ENCODE measurements at regions of chr2 and their contacts with region 1.

Region 1: GRCh38 chr2:70248181-70248847 is at the start of gene TIA1:
- DNase-seq: peak; percentile 94 to 99 (median 98)
- ATAC-seq: peak; percentile 98
- H3K4me3 ChIP-seq: peak within 1 kb of the TSS; percentile 87
- H3K4me3 Mint-ChIP-seq: peak within 1 kb of the TSS; percentile 83 to 99 (median 95)
- H3K27ac ChIP-seq: peak within 1 kb of the TSS; percentile 95
- H3K27ac Mint-ChIP-seq: peak within 1 kb of the TSS; percentile 91 to 100 (median 97)
- H3K4me1 ChIP-seq: peaks cover 13 to 24% of the 10 kb centered on the region in 2 donors
- H3K4me1 Mint-ChIP-seq: peaks cover 23 to 48% (median 40%) of the 10 kb centered on the region in 7 donors
- H3K27me3 ChIP-seq: no peaks in the 10 kb centered on the region
- H3K27me3 Mint-ChIP-seq: peaks cover 0 to 4% (median 0%) of the 10 kb centered on the region in 5 donors
- total RNA-seq, gene TIA1: 80.9 to 244 (median 163) TPM

Region 2: GRCh38 chr2:69386789-69387734 is 861.3 kb before region 1 on chr2 and contains the start of gene GFPT1:
- CTCF ChIA-PET with region 1: no interaction called
- POLR2A ChIA-PET with region 1: no interaction called
- intact Hi-C with region 1: loop called in 1 of 2 experiments (anchors 2 kb)
- DNase-seq: peak; percentile 85 to 96 (median 91)
- ATAC-seq: peak; percentile 99
- H3K4me3 ChIP-seq: peak within 1 kb of the TSS; percentile 68
- H3K4me3 Mint-ChIP-seq: peak within 1 kb of the TSS; percentile 84 to 94 (median 88)
- H3K27ac ChIP-seq: peak within 1 kb of the TSS; percentile 83
- H3K27ac Mint-ChIP-seq: peak within 1 kb of the TSS; percentile 63 to 94 (median 86)
- H3K4me1 ChIP-seq: peaks cover 17 to 18% of the 10 kb centered on the region in 2 donors
- H3K4me1 Mint-ChIP-seq: peaks cover 28 to 53% (median 41%) of the 10 kb centered on the region in 7 donors
- H3K27me3 ChIP-seq: no peaks in the 10 kb centered on the region
- H3K27me3 Mint-ChIP-seq: no peaks in the 10 kb centered on the region
- total RNA-seq, gene GFPT1: 12.8 to 29.8 (median 16.6) TPM

Region 3: GRCh38 chr2:69436938-69437750 is 811.2 kb before region 1 on chr2 and contains the start of gene NFU1:
- CTCF ChIA-PET with region 1: no interaction called
- POLR2A ChIA-PET with region 1: no interaction called
- intact Hi-C with region 1: loop called (anchors 2 kb)
- DNase-seq: peak; percentile 76 to 89 (median 85)
- ATAC-seq: peak; percentile 91
- H3K4me3 ChIP-seq: peak within 1 kb of the TSS; percentile 68
- H3K4me3 Mint-ChIP-seq: peak within 1 kb of the TSS; percentile 92 to 100 (median 94)
- H3K27ac ChIP-seq: peak within 1 kb of the TSS; percentile 98
- H3K27ac Mint-ChIP-seq: peak within 1 kb of the TSS; percentile 97 to 100 (median 99)
- H3K4me1 ChIP-seq: peaks cover 18 to 21% of the 10 kb centered on the region in 2 donors
- H3K4me1 Mint-ChIP-seq: peaks cover 14 to 48% (median 40%) of the 10 kb centered on the region in 7 donors
- H3K27me3 ChIP-seq: no peaks in the 10 kb centered on the region
- H3K27me3 Mint-ChIP-seq: no peaks in the 10 kb centered on the region
- total RNA-seq, gene NFU1: 16.1 to 25.8 (median 22.6) TPM

Region 4: GRCh38 chr2:69741619-69742466 is 506.5 kb before region 1 on chr2 and contains the start of gene ANXA4:
- CTCF ChIA-PET with region 1: no interaction called
- POLR2A ChIA-PET with region 1: no interaction called
- intact Hi-C with region 1: loop called in 1 of 2 experiments (anchors 10 kb)
- DNase-seq: peak; percentile 23 to 75 (median 33)
- ATAC-seq: peak; percentile 83
- H3K4me3 ChIP-seq: peak within 1 kb of the TSS; percentile 63
- H3K4me3 Mint-ChIP-seq: peak within 1 kb of the TSS; percentile 76 to 98 (median 94)
- H3K27ac ChIP-seq: peak within 1 kb of the TSS; percentile 67
- H3K27ac Mint-ChIP-seq: peak within 1 kb of the TSS in 8 of 9 donors; percentile 72 to 93 (median 86)
- H3K4me1 ChIP-seq: peaks cover 0 to 2% of the 10 kb centered on the region in 2 donors
- H3K4me1 Mint-ChIP-seq: peaks cover 6 to 36% (median 14%) of the 10 kb centered on the region in 7 donors
- H3K27me3 ChIP-seq: no peaks in the 10 kb centered on the region
- H3K27me3 Mint-ChIP-seq: peaks cover 0 to 21% (median 0%) of the 10 kb centered on the region in 5 donors
- total RNA-seq, gene ANXA4: 8.0 to 75.6 (median 15.9) TPM

Region 5: DNA sequence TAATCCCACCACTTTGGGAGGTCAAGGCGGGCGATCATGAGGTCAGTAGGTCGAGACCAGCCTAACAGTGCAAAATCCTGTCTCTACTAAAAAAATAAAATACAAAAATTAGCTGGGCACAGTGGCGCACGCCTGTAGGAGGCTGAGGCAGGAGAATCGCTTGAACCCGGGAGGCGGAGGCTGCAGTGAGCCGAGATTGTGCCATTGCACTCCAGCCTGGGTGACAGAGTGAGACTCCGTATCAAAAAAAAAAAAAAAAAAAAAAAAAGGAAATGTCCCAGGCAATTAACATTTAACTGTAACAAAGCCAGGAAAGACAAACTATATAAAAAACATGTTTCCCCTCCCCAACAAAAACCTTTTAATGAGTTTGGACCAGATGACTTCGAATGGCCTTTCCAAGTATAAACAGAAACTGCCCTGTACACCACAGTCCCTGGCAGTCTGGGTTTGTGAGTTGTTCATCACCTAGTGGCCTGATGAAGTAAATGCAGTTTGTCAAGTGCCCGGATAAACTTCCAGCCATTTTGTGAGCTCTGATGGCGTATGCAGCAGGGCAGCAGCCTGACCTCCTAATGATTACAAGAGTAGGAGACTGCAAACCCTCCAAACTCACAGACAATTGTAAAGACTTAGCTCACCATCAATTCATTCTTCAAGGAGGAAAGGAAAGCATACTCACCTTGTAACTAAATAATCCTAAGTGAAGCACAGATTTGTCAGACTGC is 177.6 kb before region 1 on chr2:
- CTCF ChIA-PET with region 1: no interaction called
- POLR2A ChIA-PET with region 1: interaction called, 3 read pairs
- intact Hi-C with region 1: loop called (anchors 5 kb)
- DNase-seq: peak in 8 of 9 donors; percentile 49 to 80 (median 70)
- ATAC-seq: peak; percentile 85
- H3K4me3 ChIP-seq: peak overlapping the region; percentile 48
- H3K4me3 Mint-ChIP-seq: peak overlapping the region; percentile 56 to 91 (median 80)
- H3K27ac ChIP-seq: peak overlapping the region; percentile 71
- H3K27ac Mint-ChIP-seq: peak overlapping the region; percentile 89 to 99 (median 95)
- H3K4me1 ChIP-seq: peaks cover 35 to 36% of the 10 kb centered on the region in 2 donors
- H3K4me1 Mint-ChIP-seq: peaks cover 19 to 72% (median 63%) of the 10 kb centered on the region in 7 donors
- H3K27me3 ChIP-seq: no peaks in the 10 kb centered on the region
- H3K27me3 Mint-ChIP-seq: no peaks in the 10 kb centered on the region

Region 6: GRCh38 chr2:70086838-70087701 is 161.2 kb before region 1 on chr2 and contains the start of gene PCBP1:
- CTCF ChIA-PET with region 1: no interaction called
- POLR2A ChIA-PET with region 1: interaction called, 5 read pairs
- intact Hi-C with region 1: loop called (anchors 1 to 5 kb)
- DNase-seq: peak; percentile 94 to 100 (median 98)
- ATAC-seq: peak; percentile 83
- H3K4me3 ChIP-seq: peak within 1 kb of the TSS; percentile 86
- H3K4me3 Mint-ChIP-seq: peak within 1 kb of the TSS; percentile 91 to 98 (median 97)
- H3K27ac ChIP-seq: peak within 1 kb of the TSS; percentile 100
- H3K27ac Mint-ChIP-seq: peak within 1 kb of the TSS; percentile 99 to 100 (median 100)
- H3K4me1 ChIP-seq: peaks cover 55 to 59% of the 10 kb centered on the region in 2 donors
- H3K4me1 Mint-ChIP-seq: peaks cover 40 to 67% (median 59%) of the 10 kb centered on the region in 7 donors
- H3K27me3 ChIP-seq: no peaks in the 10 kb centered on the region
- H3K27me3 Mint-ChIP-seq: peaks cover 0 to 4% (median 0%) of the 10 kb centered on the region in 5 donors
- total RNA-seq, gene PCBP1: 257 to 487 (median 368) TPM

Region 7: GRCh38 chr2:70258532-70258874 is 10.2 kb after region 1 on chr2:
- CTCF ChIA-PET with region 1: interaction called, 7 read pairs
- POLR2A ChIA-PET with region 1: interaction called, 20 read pairs
- intact Hi-C with region 1: loop called (anchors 1 kb)
- DNase-seq: peak in 2 of 9 donors; percentile 7 to 16
- ATAC-seq: no peak
- H3K4me3 ChIP-seq: peak overlapping the region; percentile 56
- H3K4me3 Mint-ChIP-seq: peak overlapping the region; percentile 88 to 96 (median 92)
- H3K27ac ChIP-seq: peak overlapping the region; percentile 71
- H3K27ac Mint-ChIP-seq: peak overlapping the region; percentile 58 to 93 (median 86)
- H3K4me1 ChIP-seq: peaks cover 7 to 21% of the 10 kb centered on the region in 2 donors
- H3K4me1 Mint-ChIP-seq: peaks cover 19 to 50% (median 46%) of the 10 kb centered on the region in 7 donors
- H3K27me3 ChIP-seq: no peaks in the 10 kb centered on the region
- H3K27me3 Mint-ChIP-seq: no peaks in the 10 kb centered on the region

Region 8: GRCh38 chr2:70354264-70354949 is 106.1 kb after region 1 on chr2:
- CTCF ChIA-PET with region 1: no interaction called
- POLR2A ChIA-PET with region 1: no interaction called
- intact Hi-C with region 1: no loop called
- DNase-seq: no peak
- ATAC-seq: no peak
- H3K4me3 ChIP-seq: no peak overlapping the region
- H3K4me3 Mint-ChIP-seq: no peak overlapping the region
- H3K27ac ChIP-seq: no peak overlapping the region
- H3K27ac Mint-ChIP-seq: peak overlapping the region in 1 of 9 donors; percentile 58
- H3K4me1 ChIP-seq: no peaks in the 10 kb centered on the region
- H3K4me1 Mint-ChIP-seq: peaks cover 0 to 9% (median 0%) of the 10 kb centered on the region in 7 donors
- H3K27me3 ChIP-seq: no peaks in the 10 kb centered on the region
- H3K27me3 Mint-ChIP-seq: peaks cover 0 to 50% (median 0%) of the 10 kb centered on the region in 5 donors